A673 (cell line): ENCODE measurements at regions of chr1 and their contacts with region 1.

Region 1: DNA sequence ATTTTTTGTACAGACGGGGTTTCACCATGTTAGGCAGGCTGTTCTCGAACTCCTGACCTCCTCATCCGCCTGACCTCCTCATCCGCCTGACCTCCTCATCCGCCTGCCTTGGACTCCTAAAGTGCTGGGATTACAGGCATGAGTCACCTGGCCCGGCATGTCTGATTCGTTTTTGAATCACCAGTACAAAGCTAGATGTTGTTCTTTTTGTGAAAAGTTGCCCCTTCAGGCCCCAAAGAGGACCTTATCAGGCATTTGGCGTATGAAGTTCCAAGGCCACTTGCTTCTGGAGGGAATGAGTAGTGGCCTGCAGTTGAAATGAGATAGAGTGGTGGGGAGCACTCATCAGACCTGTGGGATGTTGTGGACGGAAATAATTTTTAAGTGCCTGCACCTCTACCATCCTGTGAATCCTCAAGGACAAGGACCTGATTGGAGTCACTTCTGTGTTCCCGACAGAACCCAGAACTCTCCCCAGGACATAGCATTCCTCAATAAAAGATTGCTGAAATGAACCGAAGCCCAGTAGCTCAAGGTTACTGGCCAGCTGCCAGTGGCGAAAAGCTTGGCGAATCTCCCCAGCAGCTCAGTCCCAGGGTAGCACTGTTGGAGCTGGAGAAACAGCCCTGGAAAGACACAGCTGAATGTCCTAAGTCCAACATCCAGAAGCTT is 50.1 kb downstream of the NDUFS5 start:
- DNase-seq: no peak
- H3K4me3 ChIP-seq: no peak overlapping the region
- H3K27ac ChIP-seq: no peak overlapping the region
- H3K4me1 ChIP-seq: no peaks in the 10 kb centered on the region
- H3K27me3 ChIP-seq: peaks cover 3% of the 10 kb centered on the region
- CTCF ChIP-seq: no peak

Region 2: GRCh38 chr1:39061951-39062350 is 14.3 kb before region 1 on chr1:
- CTCF ChIA-PET with region 1: no interaction called
- POLR2A ChIA-PET with region 1: no interaction called
- intact Hi-C with region 1: no loop called
- DNase-seq: no peak
- H3K4me3 ChIP-seq: no peak overlapping the region
- H3K27ac ChIP-seq: no peak overlapping the region
- H3K4me1 ChIP-seq: no peaks in the 10 kb centered on the region
- H3K27me3 ChIP-seq: no peaks in the 10 kb centered on the region
- CTCF ChIP-seq: no peak

Region 3: GRCh38 chr1:39398278-39399021 is 322.2 kb after region 1 on chr1:
- CTCF ChIA-PET with region 1: no interaction called
- POLR2A ChIA-PET with region 1: interaction called, 12 read pairs
- intact Hi-C with region 1: no loop called
- DNase-seq: peak; percentile 99
- H3K4me3 ChIP-seq: peak overlapping the region; percentile 3
- H3K27ac ChIP-seq: peak overlapping the region; percentile 83
- H3K4me1 ChIP-seq: peaks cover 77% of the 10 kb centered on the region
- H3K27me3 ChIP-seq: no peaks in the 10 kb centered on the region
- CTCF ChIP-seq: no peak